Adrenal gland (tissue), 19 donors: ENCODE measurements at regions of chr10 and their contacts with region 1.

Region 1: DNA sequence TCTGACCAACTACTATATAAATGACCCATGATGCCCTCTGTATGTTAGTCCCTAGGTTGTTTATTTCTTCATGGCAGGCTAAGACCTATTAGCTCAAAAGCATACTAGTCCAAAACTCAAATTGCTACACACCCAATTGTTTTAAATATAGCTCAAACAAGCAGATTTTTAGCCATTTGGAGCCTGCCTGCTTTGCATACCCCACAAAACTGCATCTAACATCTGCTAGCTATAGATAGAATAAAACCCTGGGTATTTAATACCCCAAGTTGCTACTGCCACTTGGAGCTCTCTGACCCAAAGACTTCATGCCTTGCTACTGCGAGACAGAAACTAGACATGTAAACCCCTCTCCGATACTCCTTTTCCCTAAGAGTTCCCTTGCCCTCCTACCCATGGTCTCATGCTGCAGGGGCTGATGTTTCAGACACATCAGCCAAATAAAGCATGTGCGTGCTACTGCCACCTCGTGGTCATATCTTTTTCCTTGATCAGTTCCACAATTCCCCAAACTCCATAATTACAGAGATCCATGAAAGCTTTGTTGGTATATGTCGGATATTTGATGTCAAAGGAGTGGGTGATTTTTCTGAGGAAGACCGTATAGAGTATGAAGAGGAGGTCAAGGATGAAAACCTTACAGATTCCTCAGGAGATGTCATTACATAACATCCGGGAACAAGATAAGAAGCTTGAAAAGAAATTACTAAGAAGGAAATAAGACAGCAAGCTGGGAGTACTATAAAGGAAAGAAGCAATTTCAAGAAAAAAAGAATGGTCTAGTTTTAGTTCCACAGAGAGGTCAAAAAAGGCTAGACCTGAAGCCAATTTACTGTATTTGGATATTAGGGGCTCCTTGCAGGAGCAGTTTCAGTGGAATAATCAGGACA is 386.6 kb downstream of the SH2D4B start:
- DNase-seq: peak; percentile 29 to 78 (median 47)
- H3K4me3 ChIP-seq: no peak overlapping the region
- H3K27ac ChIP-seq: no peak overlapping the region
- H3K4me1 ChIP-seq: no peaks in the 10 kb centered on the region
- H3K27me3 ChIP-seq: no peaks in the 10 kb centered on the region
- CTCF ChIP-seq: peak; percentile 36 to 71 (median 60)
- POLR2A ChIP-seq: no peak

Region 2: GRCh38 chr10:80662577-80663261 is 261.6 kb before region 1 on chr10:
- intact Hi-C with region 1: loop called in 1 of 2 experiments (anchors 10 kb)
- DNase-seq: peak; percentile 75 to 94 (median 82)
- H3K4me3 ChIP-seq: peak overlapping the region in 1 of 4 donors; percentile 41
- H3K27ac ChIP-seq: peak overlapping the region in 2 of 5 donors; percentile 52 to 59
- H3K4me1 ChIP-seq: peaks cover 0 to 9% of the 10 kb centered on the region in 2 donors
- H3K27me3 ChIP-seq: no peaks in the 10 kb centered on the region
- CTCF ChIP-seq: peak; percentile 79 to 89 (median 86)
- POLR2A ChIP-seq: no peak

Region 3: DNA sequence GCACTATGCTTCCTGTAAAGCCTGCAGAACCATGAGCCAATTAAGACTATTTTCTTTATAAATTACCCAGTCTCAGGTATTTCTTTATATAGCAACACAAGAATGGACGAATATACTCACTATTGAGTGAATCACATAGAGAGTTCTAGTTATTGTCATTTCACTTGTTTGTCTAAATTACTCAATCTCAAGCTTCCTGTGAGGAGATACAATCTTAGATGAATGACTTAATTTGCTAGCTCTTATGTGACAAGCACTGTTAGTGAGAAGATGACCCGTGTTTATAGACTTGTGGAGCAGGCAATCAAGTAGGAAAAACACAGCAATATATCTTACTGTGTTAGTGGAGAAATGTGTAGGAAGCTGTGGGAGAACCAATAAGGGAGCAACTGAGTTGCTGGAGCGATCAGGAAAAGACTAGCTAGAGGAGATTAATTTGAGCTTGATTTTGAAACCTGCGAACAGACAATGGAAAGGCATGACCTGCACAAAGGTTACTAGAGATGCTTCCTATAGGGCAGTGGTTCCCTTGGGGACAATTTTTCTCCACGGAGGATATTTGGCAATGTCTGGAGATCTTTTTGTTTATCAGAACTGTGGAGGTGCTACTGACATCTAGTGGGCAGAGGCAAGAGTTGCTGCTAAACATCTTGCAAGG is 94.5 kb after region 1 on chr10:
- intact Hi-C with region 1: no loop called
- DNase-seq: peak; percentile 21 to 65 (median 44)
- H3K4me3 ChIP-seq: no peak overlapping the region
- H3K27ac ChIP-seq: no peak overlapping the region
- H3K4me1 ChIP-seq: peaks cover 0 to 4% of the 10 kb centered on the region in 2 donors
- H3K27me3 ChIP-seq: no peaks in the 10 kb centered on the region
- CTCF ChIP-seq: peak; percentile 39 to 66 (median 58)
- POLR2A ChIP-seq: no peak